Dendritic cell treated with granulocyte-macrophage colony-stimulating factor and Interleukin-4, amounts not matched to agents 40 ng/mL and 50 ng/mL, for 4 days (primary cell): ENCODE measurements at regions of chr14 and their contacts with region 1.

Region 1: DNA sequence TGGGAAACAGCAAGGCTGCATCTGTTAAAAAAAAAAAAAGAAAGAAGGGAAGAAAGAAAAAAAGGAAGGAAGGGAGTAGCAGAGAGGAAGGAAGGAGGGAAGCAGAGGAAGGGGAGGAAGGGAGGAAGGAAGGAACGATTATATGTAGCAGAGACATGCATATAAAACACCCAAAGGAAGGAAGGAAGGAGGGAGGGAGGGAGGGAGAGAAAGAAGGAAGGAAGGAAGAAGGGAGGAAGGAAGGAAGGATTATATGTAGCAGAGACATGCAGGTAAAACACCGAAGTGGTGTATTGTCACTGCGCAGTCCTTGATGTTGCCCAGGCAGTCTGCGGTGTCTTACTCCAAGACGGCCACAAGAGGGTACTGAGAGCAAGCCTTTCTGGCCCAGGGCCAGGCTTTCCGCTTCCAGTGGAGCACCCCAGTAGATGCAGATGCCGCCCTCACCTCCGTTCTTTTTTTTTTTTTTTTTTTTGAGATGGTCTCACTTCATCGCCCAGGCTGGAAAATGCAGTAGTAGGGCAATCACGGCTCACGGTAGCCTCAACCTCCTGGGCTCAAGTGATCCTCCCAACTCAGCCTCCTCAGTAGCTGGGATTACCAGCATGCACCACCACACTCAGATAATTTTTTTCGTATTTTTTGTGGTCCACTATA is 5.8 kb upstream of the LBHD2 start:
- H3K4me3 Mint-ChIP-seq: no peak overlapping the region
- H3K27ac Mint-ChIP-seq: no peak overlapping the region
- H3K4me1 Mint-ChIP-seq: peaks cover 22% of the 10 kb centered on the region
- H3K27me3 Mint-ChIP-seq: peaks cover 17% of the 10 kb centered on the region

Region 2: GRCh38 chr14:102966681-102967505 is 111.3 kb before region 1 on chr14:
- intact Hi-C with region 1: no loop called
- H3K4me3 Mint-ChIP-seq: no peak overlapping the region
- H3K27ac Mint-ChIP-seq: no peak overlapping the region
- H3K4me1 Mint-ChIP-seq: no peaks in the 10 kb centered on the region
- H3K27me3 Mint-ChIP-seq: no peaks in the 10 kb centered on the region

Region 3: GRCh38 chr14:103185051-103185992 is 107.1 kb after region 1 on chr14:
- intact Hi-C with region 1: loop called (anchors 1 kb)
- H3K4me3 Mint-ChIP-seq: no peak overlapping the region
- H3K27ac Mint-ChIP-seq: no peak overlapping the region
- H3K4me1 Mint-ChIP-seq: peaks cover 6% of the 10 kb centered on the region
- H3K27me3 Mint-ChIP-seq: peaks cover 52% of the 10 kb centered on the region

Region 4: DNA sequence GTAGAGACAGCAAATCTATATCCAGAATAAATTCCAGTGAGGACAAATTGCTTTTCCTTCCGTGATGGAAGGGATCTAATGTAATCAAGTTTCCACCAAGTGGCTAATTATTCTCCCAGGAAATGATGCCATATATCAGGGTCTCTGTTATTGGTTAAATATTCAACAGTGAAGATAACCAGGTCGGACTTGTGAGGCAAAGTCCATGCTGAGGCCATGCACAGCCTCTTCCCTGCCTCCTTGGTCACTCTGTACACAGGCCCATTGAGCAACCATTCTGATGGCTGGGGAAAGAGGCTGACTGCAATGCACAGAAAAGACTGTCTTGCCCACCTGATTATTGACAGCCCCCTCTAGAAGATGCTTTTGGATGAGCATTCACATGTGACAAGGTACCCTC is 135.1 kb after region 1 on chr14:
- intact Hi-C with region 1: no loop called
- H3K4me3 Mint-ChIP-seq: no peak overlapping the region
- H3K27ac Mint-ChIP-seq: no peak overlapping the region
- H3K4me1 Mint-ChIP-seq: no peaks in the 10 kb centered on the region
- H3K27me3 Mint-ChIP-seq: peaks cover 78% of the 10 kb centered on the region

Region 5: DNA sequence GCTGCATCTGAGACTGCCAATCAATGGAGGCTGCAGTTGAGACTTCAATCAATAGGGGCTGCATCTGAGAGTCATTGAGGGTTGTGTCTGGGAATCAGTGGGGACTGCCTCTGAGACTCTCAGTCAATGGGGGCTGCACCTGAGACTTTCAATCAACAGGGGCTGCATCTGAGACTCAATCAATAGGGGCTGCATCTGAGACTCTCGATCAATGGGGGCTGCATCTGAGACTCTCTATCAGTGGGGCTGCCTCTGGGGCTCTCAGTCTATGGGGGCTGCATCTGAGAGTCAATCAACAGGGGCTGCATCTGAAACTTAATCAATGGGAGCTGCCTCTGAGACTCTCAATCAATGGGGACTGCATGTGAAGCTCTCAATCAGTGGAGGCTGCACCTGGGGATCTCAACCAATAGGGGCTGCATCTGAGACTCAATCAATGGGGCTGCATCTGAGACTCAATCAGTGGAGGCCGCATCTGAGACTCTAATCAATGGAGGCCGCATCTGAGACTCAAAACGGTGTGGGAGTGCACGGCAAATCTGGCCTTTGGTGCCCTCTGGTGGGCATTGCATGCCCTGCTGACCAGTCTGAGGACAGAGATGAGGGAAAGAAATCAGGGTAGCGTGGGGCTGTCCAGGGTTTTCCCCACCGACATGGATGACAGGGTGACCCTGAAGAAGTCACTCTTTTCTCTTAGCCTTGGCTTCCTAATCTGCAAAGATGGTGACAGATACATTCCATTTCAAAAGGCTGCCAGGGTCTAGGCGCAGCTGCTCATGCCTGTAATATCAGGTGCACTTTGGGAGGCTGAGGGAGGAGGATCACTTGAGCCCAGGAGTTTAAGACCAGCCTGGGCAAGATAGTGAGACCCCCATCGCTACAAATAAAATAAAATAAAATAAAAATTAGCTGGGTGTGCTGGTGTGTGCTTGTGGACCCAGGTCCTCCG is 214.5 kb after region 1 on chr14:
- intact Hi-C with region 1: loop called (anchors 1 kb)
- H3K4me3 Mint-ChIP-seq: no peak overlapping the region
- H3K27ac Mint-ChIP-seq: no peak overlapping the region
- H3K4me1 Mint-ChIP-seq: no peaks in the 10 kb centered on the region
- H3K27me3 Mint-ChIP-seq: peaks cover 41% of the 10 kb centered on the region